CD8-positive, alpha-beta T cell (primary cell): ENCODE measurements at regions of chr9 and their contacts with region 1.

Region 1: DNA sequence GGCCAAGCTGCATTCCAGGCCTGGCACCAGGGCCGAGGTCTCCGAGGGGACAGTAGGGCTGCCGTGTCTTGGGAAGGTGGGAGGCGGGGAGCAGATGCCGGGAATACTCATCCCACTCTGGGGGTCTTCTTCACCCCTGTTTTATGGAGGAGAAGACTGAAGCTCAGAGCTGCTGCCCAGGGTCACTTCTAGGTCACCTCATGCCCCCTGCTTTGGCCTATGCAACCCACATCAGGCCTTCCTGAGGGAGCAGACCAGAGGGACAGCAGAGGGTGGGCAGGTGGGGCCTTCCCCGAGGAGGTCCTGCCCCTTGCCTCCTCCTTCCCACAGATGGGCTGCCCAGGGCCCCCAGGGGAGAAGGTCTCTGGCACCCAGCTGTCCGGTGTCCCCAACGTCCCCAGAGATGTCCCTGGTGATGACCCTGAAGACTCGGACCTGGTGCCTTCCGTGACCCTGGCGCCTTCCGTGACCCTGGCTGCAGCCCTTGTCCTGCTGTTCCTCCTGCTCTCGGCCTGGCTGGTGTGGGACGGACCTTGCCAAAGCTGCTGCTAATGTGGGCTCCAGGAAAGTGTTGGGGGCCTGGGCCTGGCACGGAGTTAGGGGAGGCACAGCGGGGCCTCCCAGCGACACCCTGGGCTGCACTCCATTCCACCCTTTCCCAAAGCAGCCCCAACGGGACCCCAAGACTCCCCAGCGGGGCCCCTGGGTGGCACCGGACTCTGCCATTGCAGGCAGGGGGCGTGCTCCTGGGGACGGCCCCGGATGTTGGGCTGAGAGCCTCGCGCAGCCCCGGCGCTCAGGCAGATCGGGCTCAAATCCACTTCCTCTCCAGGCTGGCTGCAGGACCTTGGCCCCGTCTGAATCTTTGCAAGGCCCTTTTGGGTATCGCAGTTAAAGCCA is 6.7 kb upstream of the SLC2A6 start:
- DNase-seq: peak in 2 of 9 experiments; percentile 27 to 51
- ATAC-seq: peak; percentile 54
- H3K4me3 ChIP-seq: no peak overlapping the region
- H3K4me3 Mint-ChIP-seq: peak overlapping the region; percentile 53
- H3K27ac ChIP-seq: no peak overlapping the region
- H3K27ac Mint-ChIP-seq: no peak overlapping the region
- H3K4me1 ChIP-seq: peaks cover 5% of the 10 kb centered on the region
- H3K4me1 Mint-ChIP-seq: peaks cover 6% of the 10 kb centered on the region
- H3K27me3 ChIP-seq: peaks cover 0 to 3% of the 10 kb centered on the region in 2 experiments
- H3K27me3 Mint-ChIP-seq: peaks cover 2% of the 10 kb centered on the region
- CTCF ChIP-seq: no peak

Region 2: DNA sequence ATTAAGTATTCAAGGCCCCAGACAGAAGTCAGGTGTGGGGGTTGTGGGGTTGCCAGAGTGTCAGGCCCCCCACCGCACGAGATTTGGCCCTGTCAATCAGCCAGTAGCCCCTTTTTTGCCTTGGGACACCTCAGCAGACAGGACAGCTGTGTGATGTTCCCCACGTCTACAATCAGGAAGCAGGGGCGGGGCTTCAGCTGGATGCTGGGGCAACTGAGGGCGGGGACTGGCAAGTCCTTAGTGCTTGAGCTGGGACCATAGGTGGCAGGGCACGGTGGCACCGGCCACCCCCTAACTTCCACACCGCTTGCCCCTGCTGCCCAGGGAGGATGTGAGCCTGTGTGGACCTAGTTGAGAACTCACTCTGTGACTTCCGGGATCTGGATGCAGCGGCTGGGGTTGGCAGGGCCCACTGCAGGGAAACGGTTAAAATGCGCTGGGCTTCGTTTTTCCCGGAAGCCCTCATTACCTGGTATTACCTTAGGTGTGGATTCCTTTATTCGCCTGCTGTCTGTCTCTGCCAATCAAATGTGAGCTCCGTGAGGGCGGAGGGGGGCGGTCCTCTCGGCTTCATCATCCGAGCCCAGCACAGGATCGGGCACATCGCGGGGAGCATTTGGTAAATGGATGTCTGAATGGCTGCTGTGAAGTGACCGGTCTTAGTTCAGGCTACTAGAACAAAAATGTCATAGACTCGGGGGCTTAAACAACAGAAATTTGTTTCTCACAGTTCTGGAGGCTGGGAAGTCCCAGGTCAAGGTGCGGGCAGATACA is 462.3 kb before region 1 on chr9:
- CTCF ChIA-PET with region 1: interaction called, 5 read pairs
- POLR2A ChIA-PET with region 1: no interaction called
- intact Hi-C with region 1: loop called in 1 of 2 experiments (anchors 2 kb)
- DNase-seq: peak in 5 of 9 experiments; percentile 19 to 53 (median 39)
- ATAC-seq: no peak
- H3K4me3 ChIP-seq: no peak overlapping the region
- H3K4me3 Mint-ChIP-seq: no peak overlapping the region
- H3K27ac ChIP-seq: no peak overlapping the region
- H3K27ac Mint-ChIP-seq: no peak overlapping the region
- H3K4me1 ChIP-seq: peaks cover 4% of the 10 kb centered on the region
- H3K4me1 Mint-ChIP-seq: peaks cover 13% of the 10 kb centered on the region
- H3K27me3 ChIP-seq: no peaks in the 10 kb centered on the region
- H3K27me3 Mint-ChIP-seq: no peaks in the 10 kb centered on the region
- CTCF ChIP-seq: no peak

Region 3: DNA sequence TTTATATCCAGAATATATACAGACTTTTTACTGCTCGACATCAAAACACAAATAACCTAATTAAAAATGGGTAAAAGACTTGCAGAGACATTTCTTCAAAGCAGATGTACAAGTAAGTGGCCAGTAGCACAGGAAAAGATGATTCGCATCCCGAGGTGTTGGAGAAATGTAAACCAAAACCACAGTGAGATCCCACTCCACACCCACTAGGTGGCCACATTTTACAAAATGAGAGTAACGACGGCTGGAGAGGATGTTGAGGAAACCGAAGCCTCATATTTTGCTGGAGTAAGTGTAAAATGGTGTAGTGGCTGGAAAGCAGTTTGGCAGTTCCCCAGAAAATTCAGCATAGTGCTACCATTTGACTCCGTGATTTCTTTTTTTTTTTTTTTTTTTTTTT is 300.6 kb before region 1 on chr9:
- CTCF ChIA-PET with region 1: interaction called, 53 read pairs
- POLR2A ChIA-PET with region 1: no interaction called
- intact Hi-C with region 1: loop called in 1 of 2 experiments (anchors 1 kb)
- DNase-seq: peak in 6 of 9 experiments; percentile 17 to 80 (median 35)
- ATAC-seq: peak; percentile 49
- H3K4me3 ChIP-seq: no peak overlapping the region
- H3K4me3 Mint-ChIP-seq: no peak overlapping the region
- H3K27ac ChIP-seq: no peak overlapping the region
- H3K27ac Mint-ChIP-seq: no peak overlapping the region
- H3K4me1 ChIP-seq: peaks cover 8% of the 10 kb centered on the region
- H3K4me1 Mint-ChIP-seq: peaks cover 13% of the 10 kb centered on the region
- H3K27me3 ChIP-seq: peaks cover 3% of the 10 kb centered on the region in 2 experiments
- H3K27me3 Mint-ChIP-seq: peaks cover 31% of the 10 kb centered on the region
- CTCF ChIP-seq: peak; percentile 46

Region 4: GRCh38 chr9:133356391-133357091 is 129.1 kb before region 1 on chr9 and contains the starts of genes SURF1 and SURF2:
- CTCF ChIA-PET with region 1: interaction called, 7 read pairs
- POLR2A ChIA-PET with region 1: no interaction called
- intact Hi-C with region 1: loop called (anchors 5 kb)
- DNase-seq: peak; percentile 81 to 93 (median 91)
- ATAC-seq: peak; percentile 93
- H3K4me3 ChIP-seq: peak within 1 kb of the TSS; percentile 78 to 86
- H3K4me3 Mint-ChIP-seq: peak within 1 kb of the TSS; percentile 87
- H3K27ac ChIP-seq: peak within 1 kb of the TSS; percentile 72 to 77
- H3K27ac Mint-ChIP-seq: peak within 1 kb of the TSS; percentile 93
- H3K4me1 ChIP-seq: peaks cover 30% of the 10 kb centered on the region
- H3K4me1 Mint-ChIP-seq: peaks cover 36% of the 10 kb centered on the region
- H3K27me3 ChIP-seq: no peaks in the 10 kb centered on the region
- H3K27me3 Mint-ChIP-seq: no peaks in the 10 kb centered on the region
- CTCF ChIP-seq: no peak
- total RNA-seq, gene SURF1: 34.3 to 36.8 TPM
- total RNA-seq, gene SURF2: 18.6 to 21.9 TPM